G401 (cell line): ENCODE measurements at regions of chr1 and their contacts with region 1.

Region 1: DNA sequence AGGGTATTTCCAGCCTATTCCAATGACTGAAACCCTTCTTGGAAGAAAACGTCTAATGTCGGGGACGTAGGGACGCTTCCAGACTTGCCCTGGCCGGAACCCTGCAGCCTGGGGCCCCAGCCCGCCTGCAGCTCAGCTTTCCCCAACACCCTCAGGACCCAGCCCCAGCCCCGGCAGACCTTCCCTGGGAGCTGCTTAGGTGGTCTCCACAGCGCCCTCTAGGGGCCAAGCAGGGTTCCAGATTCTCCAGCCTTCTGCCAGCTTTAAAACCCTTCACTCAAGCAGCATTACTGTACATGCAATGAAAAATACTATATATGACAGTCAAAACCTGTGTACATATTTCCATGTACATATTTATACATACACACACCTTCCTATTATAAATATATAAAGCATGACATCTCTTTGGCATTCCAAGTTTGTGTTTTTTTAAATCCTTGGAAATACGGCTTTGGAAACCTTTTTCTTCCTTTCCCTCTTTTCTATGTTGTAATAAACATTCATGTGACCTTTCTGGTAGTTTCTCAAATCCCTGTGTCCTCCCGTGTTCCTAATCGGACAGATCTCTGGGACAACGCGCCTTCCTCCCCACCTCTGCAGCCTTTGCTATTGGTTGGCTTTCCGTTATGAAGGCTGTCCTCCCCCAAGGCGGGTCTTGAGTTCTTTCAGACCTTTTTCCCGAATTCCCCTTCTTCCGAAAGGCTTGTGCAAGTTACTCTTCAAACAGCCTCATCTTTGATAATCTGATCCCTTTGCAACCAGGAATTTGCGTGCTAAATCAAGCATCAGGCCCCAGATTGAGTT is 60.3 kb downstream of the STUM start:
- DNase-seq: peak; percentile 67

Region 2: DNA sequence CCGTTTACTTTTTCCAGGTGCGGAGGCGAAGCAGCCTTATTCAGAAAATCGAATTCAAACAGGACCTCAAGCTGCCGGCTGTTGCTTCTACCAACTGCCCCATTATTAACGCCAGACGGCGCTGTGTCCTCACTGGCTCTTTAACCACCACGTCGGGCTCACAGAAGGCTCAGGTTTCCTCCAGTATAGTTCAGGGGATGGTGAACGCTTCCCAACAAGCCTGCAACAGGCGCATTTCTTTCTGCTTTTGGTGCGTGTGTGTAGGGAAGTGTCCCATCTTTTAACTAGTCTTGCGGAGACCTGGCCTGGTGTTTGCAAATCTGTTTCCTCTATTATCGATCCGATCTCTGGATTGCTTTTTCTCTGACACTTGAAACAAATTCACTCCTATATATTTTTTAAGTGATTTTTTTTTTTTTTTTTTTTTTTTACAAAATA is 61.1 kb before region 1 on chr1:
- in situ Hi-C with region 1: loop called (anchors 10 kb)
- DNase-seq: peak; percentile 93

Region 3: GRCh38 chr1:226717256-226717909 is 108.5 kb after region 1 on chr1:
- in situ Hi-C with region 1: no loop called
- DNase-seq: no peak